Activated T-helper 1 cell treated with anti-CD3 and anti-CD28 coated beads, Interleukin-12 subunit alpha, Interleukin-12 subunit beta, Interleukin-2, Interleukin-4 antibody, amounts not matched to agents 30 ng/mL and 10 ng/mL and 1 ng/mL, durations not matched to agents 14 hours and 24 hours and 36 hours (primary cell): ENCODE measurements at regions of chr10 and their contacts with region 1.

Region 1: GRCh38 chr10:16777473-16778370 is 39.5 kb downstream of the RSU1 start:
- DNase-seq: no peak
- H3K4me3 Mint-ChIP-seq: no peak overlapping the region
- H3K27ac Mint-ChIP-seq: peak overlapping the region; percentile 62
- H3K4me1 Mint-ChIP-seq: peaks cover 24% of the 10 kb centered on the region
- H3K27me3 Mint-ChIP-seq: no peaks in the 10 kb centered on the region

Region 2: GRCh38 chr10:15901889-15902288 is 875.8 kb before region 1 on chr10:
- intact Hi-C with region 1: loop called (anchors 1 kb)
- DNase-seq: no peak
- H3K4me3 Mint-ChIP-seq: no peak overlapping the region
- H3K27ac Mint-ChIP-seq: no peak overlapping the region
- H3K4me1 Mint-ChIP-seq: no peaks in the 10 kb centered on the region
- H3K27me3 Mint-ChIP-seq: no peaks in the 10 kb centered on the region

Region 3: GRCh38 chr10:16195178-16195769 is 582.4 kb before region 1 on chr10:
- intact Hi-C with region 1: loop called (anchors 1 kb)
- DNase-seq: peak; percentile 8
- H3K4me3 Mint-ChIP-seq: peak overlapping the region; percentile 16
- H3K27ac Mint-ChIP-seq: peak overlapping the region; percentile 3
- H3K4me1 Mint-ChIP-seq: peaks cover 31% of the 10 kb centered on the region
- H3K27me3 Mint-ChIP-seq: peaks cover 2% of the 10 kb centered on the region

Region 4: GRCh38 chr10:16545116-16545736 is 232.5 kb before region 1 on chr10:
- intact Hi-C with region 1: loop called (anchors 10 kb)
- DNase-seq: no peak
- H3K4me3 Mint-ChIP-seq: no peak overlapping the region
- H3K27ac Mint-ChIP-seq: no peak overlapping the region
- H3K4me1 Mint-ChIP-seq: peaks cover 7% of the 10 kb centered on the region
- H3K27me3 Mint-ChIP-seq: peaks cover 5% of the 10 kb centered on the region

Region 5: DNA sequence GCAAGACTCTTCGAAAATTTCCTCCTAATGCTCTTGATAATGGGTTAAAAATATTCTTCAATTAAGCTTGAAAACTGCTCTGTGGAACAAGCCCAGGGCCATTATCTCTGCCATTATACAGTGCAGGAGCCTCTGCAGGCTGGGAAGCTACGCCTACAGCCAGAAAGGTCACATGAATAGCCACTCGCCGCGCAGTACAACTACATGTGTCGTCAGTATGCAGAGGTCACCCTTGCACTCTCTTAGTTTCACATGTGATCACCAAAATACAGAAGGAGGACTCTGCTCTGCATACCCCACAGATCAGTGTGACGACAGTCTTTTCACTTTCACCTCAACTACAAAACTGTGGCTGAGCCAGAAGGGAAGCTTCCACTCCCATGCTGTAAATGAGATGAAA is 114.3 kb before region 1 on chr10:
- intact Hi-C with region 1: loop called (anchors 1 kb)
- DNase-seq: no peak
- H3K4me3 Mint-ChIP-seq: no peak overlapping the region
- H3K27ac Mint-ChIP-seq: no peak overlapping the region
- H3K4me1 Mint-ChIP-seq: peaks cover 12% of the 10 kb centered on the region
- H3K27me3 Mint-ChIP-seq: no peaks in the 10 kb centered on the region

Region 6: GRCh38 chr10:16717622-16718395 is 59.9 kb before region 1 on chr10:
- intact Hi-C with region 1: no loop called
- DNase-seq: no peak
- H3K4me3 Mint-ChIP-seq: no peak overlapping the region
- H3K27ac Mint-ChIP-seq: no peak overlapping the region
- H3K4me1 Mint-ChIP-seq: no peaks in the 10 kb centered on the region
- H3K27me3 Mint-ChIP-seq: no peaks in the 10 kb centered on the region